ENCODE measurements at regions of chr12 and their contacts with region 1.

Region 1: GRCh38 chr12:6764011-6764828 is 1.9 kb upstream of the PTMS start:
- DNase-seq: peak; percentile 62
- H3K4me3 Mint-ChIP-seq: peak overlapping the region; percentile 12
- H3K27ac Mint-ChIP-seq: no peak overlapping the region
- H3K4me1 Mint-ChIP-seq: peaks cover 40% of the 10 kb centered on the region
- H3K27me3 Mint-ChIP-seq: peaks cover 50% of the 10 kb centered on the region

Region 2: DNA sequence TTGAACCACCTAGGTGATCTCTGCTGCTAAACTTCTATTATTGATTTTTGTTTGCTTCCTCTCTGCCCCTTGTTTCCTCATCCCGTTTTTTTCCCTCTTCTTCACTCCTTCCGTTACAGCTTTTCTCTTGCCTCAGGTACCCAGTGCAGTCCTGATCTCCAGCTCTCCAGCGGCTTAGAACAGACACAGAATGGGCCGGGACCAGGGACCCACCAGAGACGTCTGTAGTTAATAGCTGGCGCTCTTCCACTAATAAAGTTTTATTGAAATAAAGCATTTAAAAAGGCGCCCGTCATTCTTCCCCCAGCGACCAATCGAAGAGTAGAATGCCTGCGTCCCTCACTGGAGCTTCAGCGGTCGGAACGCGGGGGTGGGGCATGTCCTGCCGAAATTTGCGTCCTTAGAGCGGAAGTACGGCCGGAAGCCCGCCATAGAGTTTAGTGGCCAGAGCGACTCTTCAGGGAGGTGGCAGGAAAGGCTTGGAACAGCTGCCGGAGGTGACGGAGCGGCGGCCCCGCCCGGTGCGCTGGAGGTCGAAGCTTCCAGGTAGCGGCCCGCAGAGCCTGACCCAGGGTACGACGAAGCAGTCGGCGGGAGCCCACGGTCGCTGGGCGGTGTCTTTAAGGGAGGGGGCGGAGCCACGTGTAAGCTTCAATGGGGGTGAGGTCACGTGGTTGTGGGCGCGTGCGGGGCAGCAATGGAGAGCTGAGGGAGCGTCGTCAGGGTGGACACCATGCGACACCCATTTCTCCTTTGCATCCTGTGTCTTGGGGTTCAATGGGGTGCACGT is 40.4 kb before region 1 on chr12 and contains the start of gene COPS7A:
- CTCF ChIA-PET with region 1: interaction called, 12 read pairs
- POLR2A ChIA-PET with region 1: no interaction called
- DNase-seq: peak; percentile 98
- H3K4me3 Mint-ChIP-seq: peak within 1 kb of the TSS; percentile 89
- H3K27ac Mint-ChIP-seq: peak within 1 kb of the TSS; percentile 92
- H3K4me1 Mint-ChIP-seq: peaks cover 24% of the 10 kb centered on the region
- H3K27me3 Mint-ChIP-seq: no peaks in the 10 kb centered on the region
- total RNA-seq, gene COPS7A: 29.5 to 36.8 TPM

Region 3: DNA sequence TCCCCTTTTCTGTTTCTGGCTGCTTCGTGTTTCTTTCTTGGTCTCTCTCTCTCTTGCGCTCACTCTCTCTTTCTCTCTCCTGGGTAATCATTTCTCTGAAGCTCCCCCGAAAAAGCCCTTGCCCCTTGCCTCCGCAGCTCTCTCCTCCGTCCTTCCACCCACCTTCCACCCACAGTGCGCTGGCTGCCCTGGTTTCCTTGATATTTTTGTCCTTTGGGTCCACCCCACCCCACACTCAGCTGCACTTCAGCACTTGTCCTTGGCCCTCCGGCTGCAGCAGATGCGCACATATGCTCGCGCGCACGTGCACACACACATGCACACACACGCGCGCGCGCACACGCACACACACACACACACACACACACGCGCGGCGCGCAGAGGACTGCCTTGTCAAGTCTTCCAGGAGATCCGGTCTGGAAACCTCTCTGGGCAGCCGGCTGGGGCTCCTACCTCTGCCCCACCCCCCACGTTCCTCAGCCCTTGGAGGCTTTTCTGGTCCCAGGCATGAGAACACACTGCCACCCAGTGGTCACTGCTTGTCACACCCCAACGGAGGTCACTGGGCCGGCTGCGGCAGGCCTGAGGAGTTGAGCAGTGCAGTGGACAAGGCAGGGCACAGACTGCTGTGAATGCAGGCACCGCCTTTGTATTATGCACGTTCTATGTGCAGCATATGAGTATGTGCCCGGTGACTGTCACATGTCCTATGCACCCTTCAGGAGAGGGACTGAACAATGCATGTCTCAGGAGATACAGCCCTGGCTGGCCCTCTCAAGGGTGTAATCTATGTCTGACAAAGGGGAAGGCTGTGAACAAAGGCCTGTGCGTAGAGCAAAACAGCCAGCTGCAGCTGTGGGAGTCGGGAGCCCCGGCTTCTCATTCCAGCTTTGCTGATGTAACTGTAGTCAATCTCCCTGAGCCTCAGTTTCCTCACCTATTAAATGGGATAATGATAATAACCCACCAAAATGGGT is 14.6 kb after region 1 on chr12:
- CTCF ChIA-PET with region 1: interaction called, 120 read pairs
- POLR2A ChIA-PET with region 1: no interaction called
- DNase-seq: peak; percentile 93
- H3K4me3 Mint-ChIP-seq: peak overlapping the region; percentile 70
- H3K27ac Mint-ChIP-seq: peak overlapping the region; percentile 84
- H3K4me1 Mint-ChIP-seq: peaks cover 69% of the 10 kb centered on the region
- H3K27me3 Mint-ChIP-seq: peaks cover 5% of the 10 kb centered on the region

Measured in activated CD4-positive, alpha-beta T cell treated with anti-CD3 and anti-CD28 coated beads, Interleukin-2, amount 10 ng/mL, durations not matched to agents 7 days and 5 days (primary cell).